Mammary epithelial cell (primary cell): ENCODE measurements at regions of chr1 and their contacts with region 1.

Region 1: GRCh38 chr1:54950369-54951163 is 29.9 kb upstream of the TMEM61 start:
- DNase-seq: peak; percentile 71
- H3K4me3 ChIP-seq: peak overlapping the region in 1 of 3 experiments; percentile 10
- H3K27ac ChIP-seq: no peak overlapping the region
- H3K4me1 ChIP-seq: peaks cover 31% of the 10 kb centered on the region
- H3K27me3 ChIP-seq: no peaks in the 10 kb centered on the region
- CTCF ChIP-seq: peak; percentile 60 to 76

Region 2: DNA sequence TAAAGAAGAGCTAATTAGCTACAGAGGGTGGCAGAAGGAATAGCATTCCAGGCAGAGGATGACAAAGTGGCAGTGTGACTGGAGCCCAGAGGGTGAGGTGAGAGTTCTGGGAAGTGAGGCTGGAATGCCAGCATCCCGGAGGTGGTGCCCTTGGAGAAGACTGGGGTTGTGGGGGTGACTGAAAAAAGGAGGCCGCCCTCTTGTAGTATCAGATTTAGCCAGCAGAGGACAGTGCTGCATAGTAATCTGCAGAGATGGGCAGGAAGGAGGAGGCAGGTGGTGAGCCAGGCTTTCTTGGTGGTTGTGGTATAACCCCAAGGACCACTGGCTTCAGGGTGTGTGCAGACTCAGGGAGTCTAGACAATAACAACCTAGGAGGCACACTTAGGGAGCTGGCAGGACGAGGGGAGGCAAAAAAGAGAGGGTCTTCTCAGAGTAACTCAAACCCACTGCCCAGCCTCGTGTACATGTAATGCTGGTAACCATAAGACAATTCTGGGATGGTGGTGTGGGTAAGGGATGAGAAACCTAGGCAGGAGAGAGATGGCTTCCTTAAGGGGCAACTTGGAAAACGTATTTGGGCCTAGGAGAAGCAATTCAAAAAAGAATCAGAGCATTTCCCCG is 278.5 kb before region 1 on chr1:
- CTCF ChIA-PET with region 1: no interaction called
- dilution Hi-C with region 1: no loop called
- in situ Hi-C with region 1: no loop called
- intact Hi-C with region 1: loop called (anchors 5 kb)
- DNase-seq: peak; percentile 41
- H3K4me3 ChIP-seq: no peak overlapping the region
- H3K27ac ChIP-seq: no peak overlapping the region
- H3K4me1 ChIP-seq: no peaks in the 10 kb centered on the region
- H3K27me3 ChIP-seq: peaks cover 3% of the 10 kb centered on the region
- CTCF ChIP-seq: peak; percentile 94 to 96

Region 3: GRCh38 chr1:54973205-54973921 is 22.8 kb after region 1 on chr1:
- CTCF ChIA-PET with region 1: no interaction called
- dilution Hi-C with region 1: no loop called
- in situ Hi-C with region 1: no loop called
- intact Hi-C with region 1: loop called (anchors 2 kb)
- DNase-seq: no peak
- H3K4me3 ChIP-seq: no peak overlapping the region
- H3K27ac ChIP-seq: no peak overlapping the region
- H3K4me1 ChIP-seq: peaks cover 33% of the 10 kb centered on the region
- H3K27me3 ChIP-seq: no peaks in the 10 kb centered on the region
- CTCF ChIP-seq: peak; percentile 31 to 59

Region 4: GRCh38 chr1:54989968-54990810 is 39.6 kb after region 1 on chr1:
- CTCF ChIA-PET with region 1: no interaction called
- dilution Hi-C with region 1: loop called (anchors 5 kb)
- in situ Hi-C with region 1: loop called (anchors 5 kb)
- intact Hi-C with region 1: no loop called
- DNase-seq: no peak
- H3K4me3 ChIP-seq: no peak overlapping the region
- H3K27ac ChIP-seq: no peak overlapping the region
- H3K4me1 ChIP-seq: no peaks in the 10 kb centered on the region
- H3K27me3 ChIP-seq: no peaks in the 10 kb centered on the region
- CTCF ChIP-seq: no peak